Posterior cingulate gyrus (tissue), 11 donors: ENCODE measurements at regions of chr4 and their contacts with region 1.

Region 1: GRCh38 chr4:121252224-121252806 is 88.2 kb upstream of the TNIP3 start:
- DNase-seq: peak; percentile 34 to 93 (median 76)

Region 2: GRCh38 chr4:120901731-120902130 is 350.6 kb before region 1 on chr4:
- intact Hi-C with region 1: no loop called
- DNase-seq: no peak

Region 3: DNA sequence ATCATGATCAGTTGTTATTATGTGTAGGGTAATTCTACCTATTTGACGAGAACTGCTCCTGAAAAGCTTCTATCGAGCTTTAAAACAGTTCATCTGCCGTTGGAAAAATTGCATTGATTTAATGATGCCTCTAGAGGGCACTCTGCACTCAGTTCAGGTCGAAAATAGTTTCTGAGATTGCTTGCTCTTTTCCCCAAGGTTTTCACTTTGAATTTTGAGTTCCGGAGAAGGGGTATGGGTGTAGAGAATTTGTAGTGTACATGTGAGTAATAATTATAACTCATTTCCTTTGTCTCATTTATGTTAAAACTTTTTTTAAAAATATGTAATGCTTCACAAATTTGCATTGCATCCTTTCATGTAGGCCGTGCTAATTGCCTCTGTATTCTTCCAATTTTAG is 59.8 kb before region 1 on chr4:
- intact Hi-C with region 1: loop called (anchors 1 kb)
- DNase-seq: no peak